ENCODE measurements at regions of chr1 and their contacts with region 1.

Region 1: GRCh38 chr1:154775621-154776605 is 94.2 kb downstream of the KCNN3 start:
- DNase-seq: no peak
- ATAC-seq: no peak
- H3K4me3 Mint-ChIP-seq: no peak overlapping the region
- H3K27ac Mint-ChIP-seq: no peak overlapping the region
- H3K4me1 Mint-ChIP-seq: no peaks in the 10 kb centered on the region
- H3K27me3 Mint-ChIP-seq: no peaks in the 10 kb centered on the region
- CTCF ChIP-seq: no peak

Region 2: DNA sequence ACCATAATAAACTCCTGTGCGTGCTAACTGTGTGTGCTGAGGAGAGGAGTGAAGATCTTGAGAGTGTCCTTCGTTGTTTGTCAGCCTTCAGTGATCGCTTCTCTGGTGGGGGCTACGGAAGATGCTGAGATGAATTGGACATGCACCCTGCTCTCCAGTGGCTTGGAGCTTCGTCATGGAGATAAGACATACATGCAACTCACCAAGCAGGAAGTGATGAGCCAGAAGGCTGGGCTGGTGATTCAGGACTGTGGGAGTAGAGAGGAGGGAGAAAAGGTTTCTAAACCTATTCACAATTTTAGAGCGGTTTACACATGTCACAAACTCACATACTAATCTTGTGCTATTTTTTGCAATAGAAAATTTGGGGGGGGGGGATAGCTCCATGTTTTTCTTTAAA is 39.1 kb before region 1 on chr1:
- CTCF ChIA-PET with region 1: no interaction called
- POLR2A ChIA-PET with region 1: interaction called, 10 read pairs
- intact Hi-C with region 1: no loop called
- DNase-seq: no peak
- ATAC-seq: no peak
- H3K4me3 Mint-ChIP-seq: no peak overlapping the region
- H3K27ac Mint-ChIP-seq: no peak overlapping the region
- H3K4me1 Mint-ChIP-seq: no peaks in the 10 kb centered on the region
- H3K27me3 Mint-ChIP-seq: peaks cover 22% of the 10 kb centered on the region
- CTCF ChIP-seq: no peak

Region 3: DNA sequence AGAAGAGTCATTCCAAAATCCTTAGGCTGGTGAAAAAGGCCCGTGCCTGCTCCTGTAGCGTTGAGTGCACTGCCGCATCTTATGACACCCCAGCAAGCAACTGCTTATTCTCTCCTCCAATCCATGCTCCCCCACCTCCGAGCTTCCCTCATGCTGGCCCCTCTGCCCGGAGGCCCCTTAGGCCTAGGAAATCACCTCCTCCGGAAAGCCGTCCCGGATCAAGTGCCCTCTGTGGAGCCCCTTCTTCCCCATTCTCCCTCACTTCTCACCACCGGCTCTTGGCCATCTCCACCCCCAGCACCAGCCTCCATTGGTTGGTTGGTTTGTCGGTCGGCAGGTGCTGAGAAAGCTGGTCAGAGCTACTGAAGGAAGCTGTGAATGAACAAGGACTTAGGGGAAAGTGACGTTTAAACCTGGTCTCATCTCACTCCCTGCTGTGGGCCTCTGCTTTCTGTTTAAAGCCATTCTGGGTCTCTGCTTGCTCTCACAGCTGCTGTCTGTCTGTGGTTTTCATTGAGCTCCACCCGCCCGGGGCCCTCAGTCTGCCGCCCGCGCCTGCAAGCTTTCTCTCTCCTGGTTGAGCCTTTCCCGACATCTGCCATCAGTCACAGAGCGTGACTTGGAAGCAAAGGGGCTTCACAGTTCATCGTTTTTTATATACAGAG is 28.0 kb before region 1 on chr1:
- CTCF ChIA-PET with region 1: no interaction called
- POLR2A ChIA-PET with region 1: no interaction called
- intact Hi-C with region 1: no loop called
- DNase-seq: no peak
- ATAC-seq: peak; percentile 14
- H3K4me3 Mint-ChIP-seq: peak overlapping the region; percentile 29
- H3K27ac Mint-ChIP-seq: peak overlapping the region; percentile 38
- H3K4me1 Mint-ChIP-seq: peaks cover 11% of the 10 kb centered on the region
- H3K27me3 Mint-ChIP-seq: peaks cover 52% of the 10 kb centered on the region
- CTCF ChIP-seq: no peak

Region 4: DNA sequence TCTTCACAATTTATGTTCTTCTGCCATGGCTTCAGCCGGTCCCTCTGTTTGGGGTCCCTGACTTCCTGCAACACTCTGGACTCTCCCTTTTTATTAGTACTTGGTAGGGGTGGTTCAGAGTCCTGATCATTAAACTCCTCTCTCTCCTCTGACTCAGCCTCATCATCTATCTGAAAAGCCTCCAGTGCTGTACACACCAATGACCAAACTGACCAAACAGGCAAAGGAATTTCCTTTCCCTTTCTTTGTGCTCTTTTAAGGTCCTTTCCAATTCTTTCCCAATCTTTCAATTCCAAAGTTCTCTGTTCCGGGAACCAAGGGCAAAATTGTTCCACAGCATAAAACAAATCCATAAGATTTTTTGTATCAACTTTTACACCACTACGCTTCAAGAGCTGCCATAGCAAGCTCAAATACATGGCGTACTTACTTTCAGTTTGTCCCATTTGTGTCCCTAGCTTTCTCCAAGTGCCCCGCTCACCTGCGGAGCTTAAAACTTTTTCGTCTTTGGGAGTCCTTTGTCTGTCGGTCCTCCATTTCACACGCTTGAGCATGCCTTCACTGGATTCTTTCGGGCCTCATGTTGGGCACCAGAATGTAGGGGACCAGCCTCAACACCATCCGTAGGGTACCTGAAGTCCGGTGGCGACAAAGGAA is 922.6 kb after region 1 on chr1:
- CTCF ChIA-PET with region 1: no interaction called
- POLR2A ChIA-PET with region 1: no interaction called
- intact Hi-C with region 1: no loop called
- DNase-seq: no peak
- ATAC-seq: no peak
- H3K4me3 Mint-ChIP-seq: no peak overlapping the region
- H3K27ac Mint-ChIP-seq: no peak overlapping the region
- H3K4me1 Mint-ChIP-seq: peaks cover 32% of the 10 kb centered on the region
- H3K27me3 Mint-ChIP-seq: no peaks in the 10 kb centered on the region
- CTCF ChIP-seq: no peak

Measured in activated B cell treated with CpG ODN at 0.5 μM for 24 hours (primary cell).